T-cell (primary cell): ENCODE measurements at regions of chr18 and their contacts with region 1.

Region 1: GRCh38 chr18:56575819-56576663 is 62.4 kb downstream of the TXNL1 start:
- DNase-seq: peak in 1 of 35 experiments; percentile 45
- ATAC-seq: no peak
- H3K4me3 ChIP-seq: no peak overlapping the region
- H3K4me3 Mint-ChIP-seq: no peak overlapping the region
- H3K27ac ChIP-seq: no peak overlapping the region
- H3K27ac Mint-ChIP-seq: no peak overlapping the region
- H3K4me1 ChIP-seq: no peaks in the 10 kb centered on the region
- H3K4me1 Mint-ChIP-seq: no peaks in the 10 kb centered on the region
- H3K27me3 ChIP-seq: peaks cover 0 to 9% of the 10 kb centered on the region in 2 experiments
- H3K27me3 Mint-ChIP-seq: peaks cover 4 to 33% of the 10 kb centered on the region in 2 donors

Region 2: GRCh38 chr18:55415258-55415871 is 1160.7 kb before region 1 on chr18:
- CTCF ChIA-PET with region 1: interaction called in 1 of 2 experiments, 13 read pairs
- POLR2A ChIA-PET with region 1: no interaction called
- DNase-seq: peak; percentile 11 to 81 (median 55)
- ATAC-seq: peak in 2 of 4 experiments; percentile 64 to 66
- H3K4me3 ChIP-seq: no peak overlapping the region
- H3K4me3 Mint-ChIP-seq: no peak overlapping the region
- H3K27ac ChIP-seq: no peak overlapping the region
- H3K27ac Mint-ChIP-seq: no peak overlapping the region
- H3K4me1 ChIP-seq: no peaks in the 10 kb centered on the region
- H3K4me1 Mint-ChIP-seq: peaks cover 2 to 11% (median 5%) of the 10 kb centered on the region in 3 donors
- H3K27me3 ChIP-seq: no peaks in the 10 kb centered on the region
- H3K27me3 Mint-ChIP-seq: peaks cover 0 to 6% of the 10 kb centered on the region in 2 donors

Region 3: GRCh38 chr18:56532176-56532840 is 43.7 kb before region 1 on chr18:
- CTCF ChIA-PET with region 1: no interaction called
- POLR2A ChIA-PET with region 1: no interaction called
- DNase-seq: no peak
- ATAC-seq: no peak
- H3K4me3 ChIP-seq: no peak overlapping the region
- H3K4me3 Mint-ChIP-seq: no peak overlapping the region
- H3K27ac ChIP-seq: no peak overlapping the region
- H3K27ac Mint-ChIP-seq: no peak overlapping the region
- H3K4me1 ChIP-seq: no peaks in the 10 kb centered on the region
- H3K4me1 Mint-ChIP-seq: no peaks in the 10 kb centered on the region
- H3K27me3 ChIP-seq: no peaks in the 10 kb centered on the region
- H3K27me3 Mint-ChIP-seq: peaks cover 0 to 7% of the 10 kb centered on the region in 2 donors